Prostate gland (tissue), 2 donors: ENCODE measurements at regions of chr3 and their contacts with region 1.

Region 1: DNA sequence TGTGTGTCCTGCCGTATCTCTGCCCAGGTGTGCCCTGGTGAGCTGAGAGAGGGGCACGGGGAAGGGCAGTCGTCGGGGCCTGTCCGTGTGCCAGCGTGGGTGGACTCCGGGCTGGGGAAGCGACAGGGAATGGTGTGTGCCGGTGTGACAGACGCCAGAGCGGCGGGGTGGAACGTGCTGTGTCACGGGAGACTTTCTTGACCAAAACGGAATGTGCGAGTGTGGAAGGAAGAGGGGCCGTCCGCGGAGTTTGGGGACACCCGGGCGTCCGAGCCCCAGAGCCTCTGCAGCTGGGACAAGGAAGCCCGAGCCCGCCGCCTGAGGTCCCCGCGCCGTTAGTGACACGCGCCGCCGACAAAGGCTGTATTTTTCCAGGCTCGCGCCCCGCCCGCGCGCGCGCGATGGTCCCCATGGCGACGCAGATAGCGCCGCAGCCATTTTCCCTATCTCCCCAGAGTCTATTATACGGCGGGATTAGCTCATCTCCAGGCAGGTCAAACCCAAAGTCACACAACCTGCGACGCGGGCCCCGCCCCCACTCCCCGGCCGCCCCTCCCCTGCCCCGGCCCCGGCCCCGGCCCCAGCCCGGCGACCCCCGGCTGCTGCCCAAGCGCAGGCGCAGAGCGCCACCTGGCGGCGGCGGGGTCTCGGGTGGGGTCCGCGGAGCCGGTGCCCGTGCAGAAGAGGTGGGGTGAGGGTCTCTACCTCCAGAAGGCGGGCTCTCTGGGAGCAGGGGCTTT is 4.6 kb upstream of the GATA2 start:
- DNase-seq: peak; percentile 79
- H3K4me3 ChIP-seq: peak overlapping the region; percentile 53 to 56
- H3K27ac ChIP-seq: peak overlapping the region; percentile 18 to 55
- H3K4me1 ChIP-seq: no peaks in the 10 kb centered on the region
- H3K27me3 ChIP-seq: no peaks in the 10 kb centered on the region
- CTCF ChIP-seq: peak; percentile 74 to 98 (median 81)
- POLR2A ChIP-seq: peak; percentile 7

Region 2: GRCh38 chr3:128075516-128076482 is 421.8 kb before region 1 on chr3:
- intact Hi-C with region 1: loop called (anchors 5 kb)
- DNase-seq: peak; percentile 80
- H3K4me3 ChIP-seq: peak overlapping the region; percentile 12 to 28
- H3K27ac ChIP-seq: peak overlapping the region in 1 of 2 donors; percentile 48
- H3K4me1 ChIP-seq: no peaks in the 10 kb centered on the region
- H3K27me3 ChIP-seq: no peaks in the 10 kb centered on the region
- CTCF ChIP-seq: peak; percentile 79 to 96 (median 95)
- POLR2A ChIP-seq: no peak

Region 3: GRCh38 chr3:128226795-128227395 is 270.7 kb before region 1 on chr3:
- intact Hi-C with region 1: loop called (anchors 5 kb)
- DNase-seq: no peak
- H3K4me3 ChIP-seq: no peak overlapping the region
- H3K27ac ChIP-seq: no peak overlapping the region
- H3K4me1 ChIP-seq: peaks cover 4% of the 10 kb centered on the region
- H3K27me3 ChIP-seq: no peaks in the 10 kb centered on the region
- CTCF ChIP-seq: peak in 3 of 4 experiments; percentile 30 to 53 (median 42)
- POLR2A ChIP-seq: no peak

Region 4: DNA sequence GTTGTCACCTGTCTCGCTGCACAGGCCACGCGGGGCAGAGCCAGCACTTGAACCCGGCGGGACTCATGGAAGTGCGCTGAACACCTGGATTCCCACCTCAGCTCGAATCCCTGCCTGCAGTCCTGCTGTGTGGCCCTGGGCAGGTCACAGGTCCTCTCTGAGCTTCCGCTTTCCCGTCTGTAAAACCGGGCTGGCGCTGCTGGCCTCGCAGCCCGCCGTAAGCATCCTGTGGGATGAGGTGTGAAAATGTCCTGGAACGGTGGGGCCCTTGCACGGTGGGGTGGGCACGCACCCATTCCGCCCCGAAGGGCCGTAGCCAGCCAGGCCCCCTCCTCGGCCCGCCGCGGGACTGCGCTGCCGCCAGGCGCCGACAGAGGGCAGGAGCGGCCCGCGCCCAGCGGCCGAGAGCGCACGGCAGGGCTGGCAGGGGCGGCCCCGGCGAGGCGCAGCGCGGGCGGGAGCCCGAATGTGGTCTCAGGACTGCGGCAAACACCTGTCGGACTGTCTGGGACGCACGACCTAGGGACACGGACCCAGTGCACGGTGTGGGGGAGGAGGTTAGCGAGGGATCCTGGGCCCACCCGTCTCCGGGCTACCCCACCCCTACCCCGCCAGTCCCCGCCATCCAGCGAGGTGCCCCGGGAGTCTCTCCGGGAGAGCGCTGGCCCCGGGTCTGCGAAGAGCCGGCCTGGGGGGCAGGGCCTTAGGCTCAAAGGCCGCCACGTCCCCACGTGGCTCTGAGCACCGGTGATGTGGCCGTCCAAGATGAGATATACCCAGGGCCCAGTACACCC is 71.2 kb before region 1 on chr3:
- intact Hi-C with region 1: loop called (anchors 2 kb)
- DNase-seq: no peak
- H3K4me3 ChIP-seq: peak overlapping the region in 1 of 2 donors; percentile 7
- H3K27ac ChIP-seq: no peak overlapping the region
- H3K4me1 ChIP-seq: peaks cover 24% of the 10 kb centered on the region
- H3K27me3 ChIP-seq: no peaks in the 10 kb centered on the region
- CTCF ChIP-seq: peak; percentile 82 to 98 (median 92)
- POLR2A ChIP-seq: no peak

Region 5: GRCh38 chr3:128559486-128560225 is 62.1 kb after region 1 on chr3:
- intact Hi-C with region 1: no loop called
- DNase-seq: no peak
- H3K4me3 ChIP-seq: no peak overlapping the region
- H3K27ac ChIP-seq: no peak overlapping the region
- H3K4me1 ChIP-seq: no peaks in the 10 kb centered on the region
- H3K27me3 ChIP-seq: no peaks in the 10 kb centered on the region
- CTCF ChIP-seq: no peak
- POLR2A ChIP-seq: no peak

Region 6: GRCh38 chr3:128607710-128608048 is 110.1 kb after region 1 on chr3:
- intact Hi-C with region 1: loop called (anchors 5 kb)
- DNase-seq: no peak
- H3K4me3 ChIP-seq: peak overlapping the region; percentile 39 to 49
- H3K27ac ChIP-seq: peak overlapping the region; percentile 53 to 76
- H3K4me1 ChIP-seq: no peaks in the 10 kb centered on the region
- H3K27me3 ChIP-seq: no peaks in the 10 kb centered on the region
- CTCF ChIP-seq: no peak
- POLR2A ChIP-seq: no peak